ENCODE measurements at regions of chr18 and their contacts with region 1.

Region 1: GRCh38 chr18:63578357-63578958 is 8.7 kb upstream of the SERPINB13 start:
- DNase-seq: peak; percentile 28
- H3K4me3 Mint-ChIP-seq: no peak overlapping the region
- H3K27ac Mint-ChIP-seq: no peak overlapping the region
- H3K4me1 Mint-ChIP-seq: no peaks in the 10 kb centered on the region
- H3K27me3 Mint-ChIP-seq: peaks cover 10% of the 10 kb centered on the region

Region 2: DNA sequence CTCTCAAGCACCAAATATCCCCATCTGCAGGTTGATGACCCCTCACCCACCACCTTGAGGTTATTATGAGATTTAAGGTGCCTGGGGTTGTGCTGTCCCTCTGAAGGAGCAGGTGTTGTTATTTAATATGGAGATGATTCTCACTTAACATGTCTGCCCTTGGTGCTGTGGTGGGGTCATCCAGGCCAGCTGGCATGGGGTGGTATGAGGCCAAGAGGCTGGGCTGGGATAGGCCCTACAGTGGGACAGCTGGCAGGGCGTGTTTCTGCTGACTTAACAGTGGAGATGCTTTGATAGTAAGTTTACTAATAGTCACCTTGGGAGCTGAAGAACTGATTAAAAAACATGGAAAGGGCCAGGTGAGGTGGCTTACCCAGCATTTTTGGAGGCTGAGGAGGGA is 13.9 kb before region 1 on chr18:
- CTCF ChIA-PET with region 1: interaction called, 14 read pairs
- intact Hi-C with region 1: no loop called
- DNase-seq: no peak
- H3K4me3 Mint-ChIP-seq: no peak overlapping the region
- H3K27ac Mint-ChIP-seq: no peak overlapping the region
- H3K4me1 Mint-ChIP-seq: no peaks in the 10 kb centered on the region
- H3K27me3 Mint-ChIP-seq: peaks cover 15% of the 10 kb centered on the region

Region 3: GRCh38 chr18:63664571-63664970 is 86.1 kb after region 1 on chr18:
- CTCF ChIA-PET with region 1: no interaction called
- intact Hi-C with region 1: no loop called
- DNase-seq: no peak
- H3K4me3 Mint-ChIP-seq: no peak overlapping the region
- H3K27ac Mint-ChIP-seq: no peak overlapping the region
- H3K4me1 Mint-ChIP-seq: no peaks in the 10 kb centered on the region
- H3K27me3 Mint-ChIP-seq: no peaks in the 10 kb centered on the region

Region 4: GRCh38 chr18:63741769-63742168 is 163.3 kb after region 1 on chr18:
- CTCF ChIA-PET with region 1: no interaction called
- intact Hi-C with region 1: no loop called
- DNase-seq: no peak
- H3K4me3 Mint-ChIP-seq: no peak overlapping the region
- H3K27ac Mint-ChIP-seq: no peak overlapping the region
- H3K4me1 Mint-ChIP-seq: no peaks in the 10 kb centered on the region
- H3K27me3 Mint-ChIP-seq: no peaks in the 10 kb centered on the region

Region 5: GRCh38 chr18:63848159-63848558 is 269.7 kb after region 1 on chr18:
- CTCF ChIA-PET with region 1: interaction called, 3 read pairs
- intact Hi-C with region 1: loop called (anchors 5 kb)
- DNase-seq: no peak
- H3K4me3 Mint-ChIP-seq: no peak overlapping the region
- H3K27ac Mint-ChIP-seq: no peak overlapping the region
- H3K4me1 Mint-ChIP-seq: no peaks in the 10 kb centered on the region
- H3K27me3 Mint-ChIP-seq: peaks cover 14% of the 10 kb centered on the region